BJ (cell line): ENCODE measurements at regions of chr14 and their contacts with region 1.

Region 1: DNA sequence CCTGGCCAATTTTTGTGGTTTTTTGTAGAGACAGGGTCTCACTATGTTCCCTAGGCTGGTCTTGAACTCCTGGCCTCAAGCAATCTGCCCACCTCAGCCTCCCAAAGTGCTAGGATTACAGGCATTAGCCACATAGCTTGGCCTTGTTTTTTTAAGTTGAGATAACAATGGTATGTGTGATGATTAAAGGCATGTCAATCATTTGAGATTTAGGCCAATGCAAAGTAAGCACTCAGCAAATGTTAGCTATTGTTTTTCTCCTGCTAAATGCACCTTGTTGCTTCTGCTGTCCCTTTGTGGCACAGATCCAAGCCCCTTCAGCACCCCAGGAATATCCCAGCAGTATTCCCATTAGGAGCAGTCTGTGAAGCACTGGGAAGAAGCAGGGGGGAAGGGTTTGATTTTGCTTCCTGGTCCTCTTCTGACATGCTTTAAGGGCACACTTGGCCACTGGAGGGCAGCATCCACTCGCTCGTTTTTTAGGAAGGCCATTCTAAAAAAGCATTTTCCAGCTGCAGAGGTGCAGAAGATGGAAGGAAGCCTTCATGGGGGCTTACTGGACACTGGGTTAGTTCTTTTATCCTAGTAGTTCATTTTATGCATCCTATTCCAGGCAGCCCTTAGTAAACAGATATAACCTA is 70.2 kb upstream of the ZFP36L1 start:
- DNase-seq: no peak
- H3K4me3 ChIP-seq: no peak overlapping the region
- H3K27me3 ChIP-seq: no peaks in the 10 kb centered on the region
- CTCF ChIP-seq: peak; percentile 82

Region 2: GRCh38 chr14:68874746-68875155 is 11.7 kb after region 1 on chr14:
- CTCF ChIA-PET with region 1: interaction called, 11 read pairs
- POLR2A ChIA-PET with region 1: no interaction called
- DNase-seq: no peak
- H3K4me3 ChIP-seq: no peak overlapping the region
- H3K27me3 ChIP-seq: no peaks in the 10 kb centered on the region
- CTCF ChIP-seq: no peak

Region 3: GRCh38 chr14:68902357-68902756 is 39.3 kb after region 1 on chr14:
- CTCF ChIA-PET with region 1: no interaction called
- POLR2A ChIA-PET with region 1: no interaction called
- DNase-seq: no peak
- H3K4me3 ChIP-seq: no peak overlapping the region
- H3K27me3 ChIP-seq: no peaks in the 10 kb centered on the region
- CTCF ChIP-seq: no peak

Region 4: GRCh38 chr14:69107407-69108003 is 244.4 kb after region 1 on chr14:
- CTCF ChIA-PET with region 1: interaction called, 136 read pairs
- POLR2A ChIA-PET with region 1: no interaction called
- DNase-seq: no peak
- H3K4me3 ChIP-seq: no peak overlapping the region
- H3K27me3 ChIP-seq: no peaks in the 10 kb centered on the region
- CTCF ChIP-seq: peak; percentile 65